HEK293 (cell line): ENCODE measurements at regions of chr2 and their contacts with region 1.

Region 1: GRCh38 chr2:175181104-175181876 is at the start of gene ATP5MC3:
- H3K4me3 ChIP-seq: peak within 1 kb of the TSS; percentile 85
- H3K27ac ChIP-seq: peak within 1 kb of the TSS; percentile 74
- H3K4me1 ChIP-seq: no peaks in the 10 kb centered on the region
- CTCF ChIP-seq: peak; percentile 84

Region 2: GRCh38 chr2:175167792-175168563 is 13.3 kb before region 1 on chr2 and contains the start of gene ATF2:
- CTCF ChIA-PET with region 1: interaction called, 5 read pairs
- POLR2A ChIA-PET with region 1: interaction called, 21 read pairs
- H3K4me3 ChIP-seq: peak within 1 kb of the TSS; percentile 80
- H3K27ac ChIP-seq: peak within 1 kb of the TSS; percentile 82
- H3K4me1 ChIP-seq: no peaks in the 10 kb centered on the region
- CTCF ChIP-seq: peak; percentile 62; the same call in 1 of the 2 replicates

Region 3: DNA sequence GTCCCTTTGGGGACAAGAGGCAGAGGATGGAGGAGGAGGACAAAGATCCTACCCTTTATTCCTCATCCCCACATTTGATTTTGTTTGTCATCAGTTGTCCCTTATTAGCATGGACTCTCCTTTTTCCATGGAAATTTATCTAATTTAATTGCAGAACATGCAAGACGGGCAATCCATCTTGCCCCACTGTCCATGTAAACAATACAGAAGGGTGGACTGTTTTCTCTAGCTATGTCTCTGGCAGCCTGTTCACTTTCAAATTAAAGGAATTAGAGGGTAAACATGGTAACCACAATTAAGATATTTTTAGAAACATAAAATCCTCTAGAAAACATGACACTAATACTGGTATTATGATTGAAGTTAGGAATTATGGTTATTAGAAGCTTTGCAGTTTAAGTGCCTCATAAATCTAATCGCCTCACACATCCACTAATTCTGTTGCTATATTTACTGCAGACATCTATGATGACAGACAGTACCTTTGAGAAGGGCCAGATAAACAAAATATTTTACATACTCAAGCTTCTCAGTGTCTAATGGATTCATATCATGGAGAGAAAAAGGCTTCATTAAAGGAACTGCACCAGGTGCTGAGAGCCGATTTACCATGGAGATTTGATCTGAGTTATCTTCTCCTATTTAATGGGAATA is 605.3 kb after region 1 on chr2:
- CTCF ChIA-PET with region 1: no interaction called
- POLR2A ChIA-PET with region 1: no interaction called
- H3K4me3 ChIP-seq: no peak overlapping the region
- H3K27ac ChIP-seq: no peak overlapping the region
- H3K4me1 ChIP-seq: no peaks in the 10 kb centered on the region
- CTCF ChIP-seq: no peak

Region 4: GRCh38 chr2:176104325-176105077 is 923.2 kb after region 1 on chr2:
- CTCF ChIA-PET with region 1: no interaction called
- POLR2A ChIA-PET with region 1: interaction called, 12 read pairs
- H3K4me3 ChIP-seq: peak overlapping the region; percentile 74
- H3K27ac ChIP-seq: peak overlapping the region; percentile 100
- H3K4me1 ChIP-seq: peaks cover 4% of the 10 kb centered on the region
- CTCF ChIP-seq: peak; percentile 96